Activated B cell treated with CpG ODN at 0.5 μM for 24 hours (primary cell): ENCODE measurements at regions of chr7 and their contacts with region 1.

Region 1: DNA sequence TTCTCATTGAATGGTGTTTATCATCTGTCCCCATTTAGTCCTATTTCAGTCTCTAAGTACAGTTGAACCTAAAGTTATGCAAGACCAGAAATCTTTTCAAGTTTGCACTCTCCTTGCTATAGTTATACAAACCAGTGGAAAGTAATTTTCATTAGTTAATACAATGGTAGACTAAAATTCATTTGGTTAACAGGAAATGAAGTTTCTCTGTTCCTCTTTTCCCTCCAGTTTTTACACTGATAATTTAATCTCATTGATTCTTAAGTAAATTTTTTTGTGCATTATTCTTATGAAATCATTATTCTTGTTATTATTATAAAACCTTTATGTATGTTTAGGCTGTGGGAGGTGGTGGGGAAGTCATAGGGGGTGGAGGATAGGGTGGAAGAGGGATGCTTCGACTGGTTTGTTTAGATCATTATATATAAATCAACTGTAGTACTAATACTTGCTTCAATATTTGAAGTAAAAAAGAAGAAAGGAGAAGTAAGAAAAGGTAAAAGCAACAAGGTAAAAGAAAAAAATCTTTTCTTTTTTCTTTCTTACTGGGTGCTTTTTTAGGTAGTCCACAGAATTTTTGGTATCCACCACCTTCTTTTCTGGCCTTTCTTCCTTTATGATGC is 104.1 kb downstream of the GPR85 start:
- DNase-seq: no peak
- ATAC-seq: peak; percentile 62
- H3K4me3 Mint-ChIP-seq: no peak overlapping the region
- H3K27ac Mint-ChIP-seq: peak overlapping the region; percentile 79
- H3K4me1 Mint-ChIP-seq: peaks cover 28% of the 10 kb centered on the region
- H3K27me3 Mint-ChIP-seq: no peaks in the 10 kb centered on the region
- CTCF ChIP-seq: no peak

Region 2: DNA sequence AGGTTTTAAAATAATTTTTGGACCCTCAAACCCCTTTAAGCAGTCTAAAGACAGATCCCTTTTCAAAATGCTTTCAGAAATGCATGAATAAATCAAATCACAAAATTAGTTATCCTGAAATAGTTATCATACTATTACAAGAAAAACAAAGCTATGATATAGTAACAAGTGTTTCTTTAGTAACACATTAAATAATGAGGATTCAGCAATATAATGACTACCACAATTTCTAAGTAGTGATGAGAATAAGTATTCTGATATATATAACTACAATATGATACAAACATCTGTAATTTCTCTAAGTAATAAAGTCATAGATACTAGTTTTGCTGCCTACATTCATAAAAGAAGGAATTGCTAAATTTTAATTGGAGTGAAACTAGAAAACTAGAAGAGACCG is 139.4 kb before region 1 on chr7:
- CTCF ChIA-PET with region 1: no interaction called
- POLR2A ChIA-PET with region 1: no interaction called
- intact Hi-C with region 1: no loop called
- DNase-seq: no peak
- ATAC-seq: no peak
- H3K4me3 Mint-ChIP-seq: no peak overlapping the region
- H3K27ac Mint-ChIP-seq: no peak overlapping the region
- H3K4me1 Mint-ChIP-seq: peaks cover 29% of the 10 kb centered on the region
- H3K27me3 Mint-ChIP-seq: no peaks in the 10 kb centered on the region
- CTCF ChIP-seq: no peak

Region 3: DNA sequence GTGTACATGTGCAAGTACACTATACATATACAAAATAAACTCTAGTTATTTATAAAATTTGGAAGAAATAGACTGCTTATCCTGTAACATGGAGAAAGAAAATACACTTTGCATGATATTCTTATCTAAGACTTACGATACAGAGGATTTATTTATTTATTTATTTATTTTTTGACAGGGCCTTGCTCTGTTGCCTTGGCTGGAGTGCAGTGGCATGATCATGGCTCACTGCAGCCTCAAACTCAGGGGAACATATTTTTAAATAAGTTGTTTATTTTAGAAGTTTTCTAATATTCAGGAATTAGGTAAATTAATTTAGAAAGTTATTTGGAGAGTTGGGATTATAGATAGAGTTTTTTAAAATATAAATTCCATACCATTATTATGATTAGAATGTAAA is 12.6 kb before region 1 on chr7:
- CTCF ChIA-PET with region 1: no interaction called
- POLR2A ChIA-PET with region 1: no interaction called
- intact Hi-C with region 1: loop called (anchors 2 kb)
- DNase-seq: no peak
- ATAC-seq: no peak
- H3K4me3 Mint-ChIP-seq: no peak overlapping the region
- H3K27ac Mint-ChIP-seq: no peak overlapping the region
- H3K4me1 Mint-ChIP-seq: no peaks in the 10 kb centered on the region
- H3K27me3 Mint-ChIP-seq: peaks cover 10% of the 10 kb centered on the region
- CTCF ChIP-seq: no peak